RWPE1 (cell line): ENCODE measurements at regions of chr17 and their contacts with region 1.

Region 1: DNA sequence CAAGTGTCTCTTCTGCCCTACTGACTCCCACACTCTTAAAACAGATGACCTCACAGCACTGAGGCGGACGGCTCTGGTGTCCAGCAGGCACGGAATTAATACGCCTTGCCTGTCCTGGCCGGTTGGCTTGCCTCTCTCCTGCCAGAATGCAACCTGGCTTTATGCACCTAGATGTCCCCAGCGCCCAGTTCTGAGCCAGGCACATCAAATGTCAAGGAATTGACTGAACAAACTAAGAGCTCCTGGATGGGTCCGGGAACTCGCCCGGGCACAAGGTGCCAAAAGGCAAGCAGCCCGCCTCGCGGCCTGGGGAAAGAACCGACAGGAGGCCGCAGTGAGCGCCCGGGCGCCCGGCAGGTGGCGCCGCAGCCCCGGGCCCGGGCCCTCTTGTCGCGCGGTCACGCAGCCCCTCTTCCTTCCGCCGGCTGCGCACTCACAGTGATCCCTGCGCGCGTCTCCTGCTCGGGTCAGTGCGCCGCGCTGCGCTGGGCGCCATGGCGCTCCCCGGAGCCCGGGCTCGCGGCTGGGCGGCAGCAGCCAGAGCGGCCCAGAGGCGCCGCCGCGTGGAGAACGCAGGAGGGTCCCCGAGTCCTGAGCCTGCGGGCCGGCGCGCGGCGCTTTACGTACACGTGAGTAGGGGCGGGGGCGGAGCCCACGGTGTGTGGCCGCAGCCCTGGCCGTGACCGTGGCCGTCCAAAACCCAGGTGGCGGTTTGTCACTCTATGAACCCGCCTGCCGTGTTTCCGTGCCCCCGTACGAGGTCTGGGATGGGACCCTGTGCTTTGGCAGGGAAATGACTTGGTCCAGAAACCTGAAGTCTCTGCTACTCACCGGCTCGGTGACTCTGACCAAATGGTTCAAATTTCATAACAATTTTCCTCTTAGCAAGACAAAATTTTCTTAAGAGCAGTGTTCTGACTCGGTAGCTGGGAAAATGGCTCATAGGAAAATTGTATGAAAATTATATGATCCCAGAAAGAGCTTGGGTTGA is at the start of gene RSAD1:
- DNase-seq: peak; percentile 82
- H3K27ac ChIP-seq: peak within 1 kb of the TSS; percentile 85
- CTCF ChIP-seq: peak; percentile 99

Region 2: GRCh38 chr17:50200457-50201275 is 278.0 kb before region 1 on chr17:
- CTCF ChIA-PET with region 1: interaction called, 11 read pairs
- POLR2A ChIA-PET with region 1: no interaction called
- DNase-seq: peak; percentile 87
- H3K27ac ChIP-seq: peak overlapping the region; percentile 93
- CTCF ChIP-seq: peak; percentile 100

Region 3: GRCh38 chr17:50361561-50362480 is 116.9 kb before region 1 on chr17:
- CTCF ChIA-PET with region 1: interaction called, 16 read pairs
- POLR2A ChIA-PET with region 1: no interaction called
- DNase-seq: no peak
- H3K27ac ChIP-seq: peak overlapping the region; percentile 50
- CTCF ChIP-seq: peak; percentile 51

Region 4: GRCh38 chr17:50397111-50397918 is 81.4 kb before region 1 on chr17 and contains the start of gene LRRC59:
- CTCF ChIA-PET with region 1: interaction called, 18 read pairs
- POLR2A ChIA-PET with region 1: interaction called, 5 read pairs
- DNase-seq: peak; percentile 86
- H3K27ac ChIP-seq: peak within 1 kb of the TSS; percentile 86
- CTCF ChIP-seq: peak; percentile 99

Region 5: DNA sequence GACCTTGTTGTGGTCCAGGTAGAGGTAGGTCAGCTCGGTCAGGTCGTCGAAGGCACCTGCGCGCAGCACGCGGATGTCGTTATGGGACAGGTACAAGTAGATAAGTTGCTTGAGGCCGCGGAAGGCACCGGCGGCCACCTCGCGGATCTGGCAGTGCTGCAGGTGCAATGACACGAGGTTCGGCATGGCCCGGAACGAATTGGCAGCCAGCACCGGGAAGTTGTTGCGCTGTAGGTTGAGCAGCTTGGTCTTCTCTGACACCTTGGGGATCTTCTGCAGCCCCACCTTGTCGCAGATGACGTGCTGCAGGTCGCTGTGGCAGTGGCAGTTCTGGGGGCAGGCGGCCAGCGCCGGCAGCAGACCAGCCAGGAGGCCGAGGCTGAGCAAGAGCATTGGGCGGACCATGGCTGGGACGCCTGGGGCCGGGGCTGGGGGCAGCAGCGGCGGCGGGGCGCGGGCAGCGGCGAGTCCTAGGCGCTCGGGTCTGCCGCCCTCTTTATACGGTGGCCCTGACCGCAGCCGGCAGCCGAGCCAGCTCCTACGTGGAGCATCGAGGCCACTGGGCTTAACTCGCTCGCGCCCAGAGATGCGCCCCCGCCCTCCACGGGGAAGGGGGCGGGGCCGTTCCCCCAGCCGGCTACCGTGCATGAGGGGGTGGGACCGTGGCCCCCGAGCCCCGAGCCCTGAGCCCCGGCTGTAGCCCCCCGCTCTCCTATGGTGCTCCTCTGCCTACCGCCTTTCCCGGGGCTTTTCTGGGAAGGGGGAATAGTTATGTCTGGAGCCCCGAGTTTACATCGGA is 10.1 kb before region 1 on chr17 and contains the start of gene CHAD:
- CTCF ChIA-PET with region 1: interaction called, 19 read pairs
- POLR2A ChIA-PET with region 1: no interaction called
- DNase-seq: no peak
- H3K27ac ChIP-seq: no peak within 1 kb of the TSS
- CTCF ChIP-seq: no peak

Region 6: GRCh38 chr17:50532381-50533024 is 53.8 kb after region 1 on chr17 and contains the start of gene EPN3:
- CTCF ChIA-PET with region 1: interaction called, 15 read pairs
- POLR2A ChIA-PET with region 1: no interaction called
- DNase-seq: peak; percentile 83
- H3K27ac ChIP-seq: peak within 1 kb of the TSS; percentile 93
- CTCF ChIP-seq: no peak

Region 7: DNA sequence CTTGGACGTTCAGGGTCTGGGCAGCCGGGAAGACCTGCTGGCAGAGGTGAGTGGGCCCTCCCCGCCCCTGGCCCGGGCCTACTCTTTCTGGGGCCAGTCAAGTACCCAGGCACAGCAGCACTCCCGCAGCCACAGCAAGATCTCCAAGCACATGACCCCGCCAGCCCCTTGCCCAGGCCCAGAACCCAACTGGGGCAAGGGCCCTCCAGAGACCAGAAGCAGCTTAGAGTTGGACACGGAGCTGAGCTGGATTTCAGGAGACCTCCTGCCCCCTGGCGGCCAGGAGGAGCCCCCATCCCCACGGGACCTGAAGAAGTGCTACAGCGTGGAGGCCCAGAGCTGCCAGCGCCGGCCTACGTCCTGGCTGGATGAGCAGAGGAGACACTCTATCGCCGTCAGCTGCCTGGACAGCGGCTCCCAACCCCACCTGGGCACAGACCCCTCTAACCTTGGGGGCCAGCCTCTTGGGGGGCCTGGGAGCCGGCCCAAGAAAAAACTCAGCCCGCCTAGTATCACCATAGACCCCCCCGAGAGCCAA is 147.4 kb after region 1 on chr17:
- CTCF ChIA-PET with region 1: interaction called, 23 read pairs
- POLR2A ChIA-PET with region 1: no interaction called
- DNase-seq: peak; percentile 60
- H3K27ac ChIP-seq: no peak overlapping the region
- CTCF ChIP-seq: peak; percentile 69

Region 8: DNA sequence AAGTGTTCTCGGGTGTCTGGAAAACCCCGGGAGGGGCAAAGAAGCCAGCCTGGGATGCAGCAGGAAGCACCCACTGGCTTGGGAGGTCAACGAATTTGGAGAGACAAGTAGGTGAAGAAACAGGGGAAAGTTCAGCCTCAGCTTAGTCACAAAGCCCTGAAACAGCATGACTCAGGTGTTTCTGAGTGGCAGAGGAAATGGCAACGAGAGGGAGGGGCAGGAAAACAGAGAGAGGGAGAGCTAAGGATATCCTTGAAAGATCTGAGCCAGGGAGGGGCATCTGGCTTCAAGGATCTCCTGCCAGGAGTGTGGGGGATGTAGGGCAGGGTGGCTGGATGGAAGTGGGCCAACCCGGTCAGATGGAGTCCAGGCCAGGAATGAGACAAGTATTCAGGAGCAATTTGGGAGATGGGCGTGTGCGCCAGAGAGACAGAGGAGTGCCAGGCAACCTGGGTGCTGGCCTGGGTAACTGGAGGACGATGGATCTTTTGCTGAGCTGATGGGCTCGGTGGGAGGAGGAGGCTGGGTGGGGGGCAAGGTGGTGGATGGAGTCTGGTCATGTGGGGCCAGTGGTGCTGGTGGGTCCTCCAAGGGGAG is 183.2 kb after region 1 on chr17:
- CTCF ChIA-PET with region 1: no interaction called
- POLR2A ChIA-PET with region 1: no interaction called
- DNase-seq: peak; percentile 98
- H3K27ac ChIP-seq: peak overlapping the region; percentile 85
- CTCF ChIP-seq: no peak